Gastrocnemius medialis (tissue), 4 donors: ENCODE measurements at regions of chr18 and their contacts with region 1.

Region 1: DNA sequence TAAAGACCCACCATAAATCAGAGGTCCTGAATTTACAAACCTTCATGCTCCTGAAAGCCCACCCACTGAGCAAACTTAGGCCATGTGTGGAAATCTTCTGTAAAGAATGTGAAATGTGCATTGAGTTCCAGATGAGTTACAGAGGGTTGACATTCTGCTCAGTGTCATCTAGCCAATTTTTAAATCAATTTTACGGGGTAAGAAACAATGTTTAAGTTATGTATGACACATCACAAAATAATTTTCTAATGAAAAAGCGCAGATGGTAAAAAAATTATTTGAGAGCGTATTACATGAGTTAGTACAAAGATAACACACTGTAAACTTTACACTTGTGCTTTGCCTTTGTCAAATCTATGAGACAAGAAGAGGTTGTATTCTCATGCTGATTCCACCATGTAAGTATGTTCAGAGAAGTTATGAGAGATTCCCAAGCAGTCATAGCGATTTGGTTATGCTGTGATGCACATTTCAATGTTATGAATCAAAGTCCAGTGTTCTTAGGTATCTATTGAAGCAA is 446.3 kb downstream of the ADCYAP1 start:
- DNase-seq: no peak
- ATAC-seq: no peak
- H3K4me3 ChIP-seq: no peak overlapping the region
- H3K27ac ChIP-seq: no peak overlapping the region
- H3K4me1 ChIP-seq: no peaks in the 10 kb centered on the region
- H3K27me3 ChIP-seq: no peaks in the 10 kb centered on the region
- CTCF ChIP-seq: no peak
- POLR2A ChIP-seq: no peak

Region 2: DNA sequence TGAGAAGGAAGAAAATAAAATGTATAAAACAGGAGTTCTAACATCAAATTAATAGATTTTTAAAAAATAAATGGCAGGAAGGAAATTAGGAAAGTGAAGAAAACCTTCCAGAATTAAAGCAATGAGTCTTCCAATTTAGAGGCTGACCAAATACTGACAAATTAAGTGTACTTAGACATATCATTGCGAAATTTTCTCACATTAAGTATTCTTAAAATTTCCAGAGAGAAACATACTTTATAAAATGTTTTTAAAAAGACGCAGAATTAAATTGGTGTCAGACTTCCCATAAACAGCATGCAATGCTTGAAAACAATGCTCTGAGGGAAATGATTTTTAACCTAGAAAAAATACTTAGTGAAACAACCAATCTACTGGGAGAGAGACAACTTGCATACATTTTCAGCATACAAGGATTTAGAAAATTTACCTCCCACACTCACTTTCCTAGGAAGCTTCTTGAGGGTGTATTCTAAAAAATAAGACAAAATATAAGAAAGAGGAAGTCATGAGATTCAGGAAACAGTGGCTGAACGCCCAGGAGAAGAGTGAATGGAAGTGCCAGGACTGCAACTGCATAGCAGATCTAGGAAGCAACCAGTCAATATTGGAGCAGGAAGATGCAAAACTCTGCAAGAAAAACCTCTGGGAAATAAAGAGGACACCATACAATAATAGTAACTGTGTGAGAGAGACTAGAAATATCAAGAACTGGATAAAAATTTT is 106.4 kb before region 1 on chr18:
- in situ Hi-C with region 1: loop called in 1 of 4 experiments (anchors 25 kb)
- intact Hi-C with region 1: no loop called
- DNase-seq: no peak
- ATAC-seq: no peak
- H3K4me3 ChIP-seq: no peak overlapping the region
- H3K27ac ChIP-seq: no peak overlapping the region
- H3K4me1 ChIP-seq: no peaks in the 10 kb centered on the region
- H3K27me3 ChIP-seq: no peaks in the 10 kb centered on the region
- CTCF ChIP-seq: no peak
- POLR2A ChIP-seq: no peak